Activated CD4-positive, alpha-beta T cell treated with anti-CD3 and anti-CD28 coated beads, Interleukin-2, amount 10 ng/mL, durations not matched to agents 24 days and 14 days (primary cell): ENCODE measurements at regions of chr1 and their contacts with region 1.

Region 1: DNA sequence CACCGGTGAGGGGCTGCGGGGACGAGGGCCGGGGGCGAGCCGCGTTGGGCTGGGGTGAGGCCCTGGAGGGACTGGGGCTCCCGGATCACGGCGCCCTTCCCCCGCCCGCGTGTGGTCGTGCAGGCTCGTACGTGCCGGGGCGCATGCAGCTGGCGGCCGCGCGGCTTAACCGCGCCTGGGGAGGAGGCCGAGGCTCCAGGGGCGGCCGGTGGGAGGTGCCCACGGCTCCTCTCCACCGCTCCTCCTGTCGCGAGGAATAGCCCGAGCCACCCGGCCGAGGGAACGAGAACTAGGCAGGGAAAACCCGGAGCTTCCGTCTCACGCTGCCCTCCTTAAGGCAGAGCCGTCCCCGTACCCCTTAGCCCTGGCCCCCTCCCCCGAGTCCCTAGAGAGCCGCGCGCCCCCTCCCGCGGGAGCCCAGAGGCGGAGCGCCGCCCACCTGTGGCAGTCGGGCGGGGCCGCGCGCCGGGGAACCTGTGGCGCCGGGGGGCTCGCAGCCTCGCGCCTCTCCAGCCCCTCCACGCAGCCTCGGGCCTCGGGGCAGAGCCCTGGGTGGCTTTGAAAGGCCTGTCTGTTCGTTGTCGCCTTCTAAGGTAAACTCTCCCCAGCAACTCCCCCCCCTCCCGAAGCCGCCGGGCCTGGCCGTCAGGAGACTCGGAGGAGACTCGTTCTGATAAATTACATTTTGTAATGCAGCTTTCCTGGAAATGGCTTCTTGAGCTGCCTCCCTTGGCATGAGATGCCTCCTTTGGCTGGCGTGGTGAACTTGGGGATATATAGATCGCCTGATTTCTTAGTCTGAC is 746 bp downstream of the AK4 start:
- DNase-seq: peak; percentile 90
- H3K4me3 Mint-ChIP-seq: peak overlapping the region; percentile 93
- H3K27ac Mint-ChIP-seq: peak overlapping the region; percentile 96
- H3K4me1 Mint-ChIP-seq: peaks cover 41% of the 10 kb centered on the region
- H3K27me3 Mint-ChIP-seq: peaks cover 13% of the 10 kb centered on the region

Region 2: DNA sequence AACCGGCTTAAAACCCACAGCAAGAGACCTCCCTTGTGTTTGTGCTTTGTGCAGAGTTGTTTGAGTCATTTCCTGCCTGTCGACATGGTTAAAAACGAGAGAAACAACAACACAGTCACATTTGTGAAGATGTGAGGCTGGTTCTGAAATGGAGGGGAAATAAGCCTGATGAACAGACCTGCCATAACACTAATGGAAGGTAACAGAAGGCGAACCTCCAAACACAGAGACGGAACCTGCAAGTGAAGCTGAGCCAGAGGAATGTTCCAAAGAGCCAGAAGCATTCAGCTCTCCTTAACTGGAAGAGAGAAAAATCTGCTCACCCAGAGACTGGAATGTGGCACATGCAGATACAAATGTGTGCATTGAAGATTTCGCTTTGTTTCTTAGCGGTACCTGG is 457.1 kb before region 1 on chr1:
- intact Hi-C with region 1: no loop called
- DNase-seq: peak; percentile 56
- H3K4me3 Mint-ChIP-seq: no peak overlapping the region
- H3K27ac Mint-ChIP-seq: no peak overlapping the region
- H3K4me1 Mint-ChIP-seq: peaks cover 7% of the 10 kb centered on the region
- H3K27me3 Mint-ChIP-seq: no peaks in the 10 kb centered on the region

Region 3: GRCh38 chr1:65002508-65003315 is 146.0 kb before region 1 on chr1:
- intact Hi-C with region 1: loop called (anchors 1 kb)
- DNase-seq: peak; percentile 90
- H3K4me3 Mint-ChIP-seq: peak overlapping the region; percentile 70
- H3K27ac Mint-ChIP-seq: peak overlapping the region; percentile 43
- H3K4me1 Mint-ChIP-seq: peaks cover 23% of the 10 kb centered on the region
- H3K27me3 Mint-ChIP-seq: peaks cover 33% of the 10 kb centered on the region

Region 4: DNA sequence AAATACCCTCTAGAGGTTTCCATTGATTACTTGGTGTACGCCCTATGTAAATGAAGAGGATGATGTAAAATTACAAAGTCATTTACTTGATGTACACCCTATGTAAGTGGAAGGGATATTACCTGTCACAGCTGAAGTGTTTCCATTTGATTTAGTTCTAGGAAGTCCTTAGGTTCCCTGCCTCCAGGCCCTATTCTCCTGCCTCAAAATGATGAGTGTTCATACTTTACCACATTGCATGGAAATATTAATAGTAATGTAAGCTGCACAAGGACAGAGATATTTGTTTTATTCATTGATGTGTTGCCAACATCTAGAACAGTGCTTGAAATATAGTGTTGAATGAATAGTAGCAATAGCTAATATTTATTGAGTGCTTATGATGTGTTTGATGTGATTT is 10.2 kb before region 1 on chr1:
- intact Hi-C with region 1: no loop called
- DNase-seq: no peak
- H3K4me3 Mint-ChIP-seq: no peak overlapping the region
- H3K27ac Mint-ChIP-seq: no peak overlapping the region
- H3K4me1 Mint-ChIP-seq: peaks cover 4% of the 10 kb centered on the region
- H3K27me3 Mint-ChIP-seq: peaks cover 17% of the 10 kb centered on the region

Region 5: GRCh38 chr1:65213271-65214023 is 64.7 kb after region 1 on chr1:
- intact Hi-C with region 1: loop called (anchors 1 kb)
- DNase-seq: peak; percentile 63
- H3K4me3 Mint-ChIP-seq: peak overlapping the region; percentile 72
- H3K27ac Mint-ChIP-seq: peak overlapping the region; percentile 93
- H3K4me1 Mint-ChIP-seq: peaks cover 69% of the 10 kb centered on the region
- H3K27me3 Mint-ChIP-seq: no peaks in the 10 kb centered on the region

Region 6: GRCh38 chr1:65254319-65255034 is 105.7 kb after region 1 on chr1:
- intact Hi-C with region 1: loop called (anchors 1 kb)
- DNase-seq: peak; percentile 97
- H3K4me3 Mint-ChIP-seq: peak overlapping the region; percentile 95
- H3K27ac Mint-ChIP-seq: peak overlapping the region; percentile 79
- H3K4me1 Mint-ChIP-seq: peaks cover 21% of the 10 kb centered on the region
- H3K27me3 Mint-ChIP-seq: peaks cover 37% of the 10 kb centered on the region

Region 7: GRCh38 chr1:65820983-65821382 is 672.2 kb after region 1 on chr1:
- intact Hi-C with region 1: no loop called
- DNase-seq: no peak
- H3K4me3 Mint-ChIP-seq: no peak overlapping the region
- H3K27ac Mint-ChIP-seq: no peak overlapping the region
- H3K4me1 Mint-ChIP-seq: no peaks in the 10 kb centered on the region
- H3K27me3 Mint-ChIP-seq: peaks cover 48% of the 10 kb centered on the region